Mammary epithelial cell (primary cell): ENCODE measurements at regions of chr18 and their contacts with region 1.

Region 1: DNA sequence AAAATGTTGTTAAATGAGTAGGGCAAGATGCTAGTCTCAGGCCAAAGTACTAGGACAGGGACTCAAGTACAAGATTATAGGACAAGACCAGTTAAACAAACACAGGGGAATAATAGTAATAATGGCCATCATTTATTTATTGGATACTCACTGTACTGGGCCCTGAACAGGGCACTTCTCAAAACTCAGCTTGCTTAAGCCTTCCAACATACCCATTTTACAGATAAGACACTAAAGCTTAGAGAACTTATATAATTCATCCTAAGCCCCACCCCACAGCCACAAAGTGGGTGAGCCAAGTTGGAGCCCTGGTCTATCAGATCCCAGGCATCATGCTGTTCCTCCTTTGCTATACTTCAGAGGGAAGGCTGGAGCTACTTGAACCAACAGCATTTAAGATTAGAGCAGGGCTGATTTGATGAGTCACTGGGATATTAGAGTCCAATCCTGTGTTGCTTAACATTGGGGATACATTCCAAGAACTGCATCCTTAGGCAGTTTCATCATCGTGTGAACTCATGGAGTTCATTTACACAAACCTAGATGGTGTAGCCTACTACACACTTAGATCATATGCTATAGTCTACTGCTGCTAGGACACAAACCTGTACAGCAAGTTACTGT is 153.6 kb downstream of the MTCL1 start:
- DNase-seq: peak; percentile 93
- H3K4me3 ChIP-seq: no peak overlapping the region
- H3K27ac ChIP-seq: no peak overlapping the region
- H3K4me1 ChIP-seq: peaks cover 17% of the 10 kb centered on the region
- H3K27me3 ChIP-seq: no peaks in the 10 kb centered on the region
- CTCF ChIP-seq: no peak

Region 2: DNA sequence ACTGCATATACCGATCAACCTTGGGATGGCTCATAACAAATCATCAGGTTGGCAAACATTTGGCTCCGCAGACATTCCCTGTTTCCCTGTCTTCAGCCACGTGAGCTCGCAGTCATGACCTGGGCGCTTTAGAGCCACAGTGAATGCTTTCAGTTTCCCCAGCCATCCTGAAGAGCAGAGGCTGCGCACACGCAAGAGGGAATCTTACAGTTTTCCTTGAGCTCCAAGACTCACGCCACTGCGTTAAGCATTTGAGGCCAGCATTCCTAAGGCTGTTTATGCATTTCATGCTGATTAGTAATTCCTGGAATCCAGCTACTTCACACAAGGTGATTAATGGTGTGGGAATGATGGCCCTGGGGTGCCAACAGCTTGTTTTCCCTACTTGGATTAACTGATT is 58.6 kb before region 1 on chr18:
- CTCF ChIA-PET with region 1: interaction called, 9 read pairs
- dilution Hi-C with region 1: loop called (anchors 10 kb)
- in situ Hi-C with region 1: no loop called
- intact Hi-C with region 1: no loop called
- DNase-seq: peak; percentile 78
- H3K4me3 ChIP-seq: no peak overlapping the region
- H3K27ac ChIP-seq: peak overlapping the region; percentile 51
- H3K4me1 ChIP-seq: peaks cover 39% of the 10 kb centered on the region
- H3K27me3 ChIP-seq: no peaks in the 10 kb centered on the region
- CTCF ChIP-seq: no peak

Region 3: GRCh38 chr18:8816816-8817215 is 42.2 kb before region 1 on chr18:
- CTCF ChIA-PET with region 1: no interaction called
- dilution Hi-C with region 1: no loop called
- in situ Hi-C with region 1: no loop called
- intact Hi-C with region 1: no loop called
- DNase-seq: no peak
- H3K4me3 ChIP-seq: no peak overlapping the region
- H3K27ac ChIP-seq: no peak overlapping the region
- H3K4me1 ChIP-seq: no peaks in the 10 kb centered on the region
- H3K27me3 ChIP-seq: no peaks in the 10 kb centered on the region
- CTCF ChIP-seq: no peak

Region 4: DNA sequence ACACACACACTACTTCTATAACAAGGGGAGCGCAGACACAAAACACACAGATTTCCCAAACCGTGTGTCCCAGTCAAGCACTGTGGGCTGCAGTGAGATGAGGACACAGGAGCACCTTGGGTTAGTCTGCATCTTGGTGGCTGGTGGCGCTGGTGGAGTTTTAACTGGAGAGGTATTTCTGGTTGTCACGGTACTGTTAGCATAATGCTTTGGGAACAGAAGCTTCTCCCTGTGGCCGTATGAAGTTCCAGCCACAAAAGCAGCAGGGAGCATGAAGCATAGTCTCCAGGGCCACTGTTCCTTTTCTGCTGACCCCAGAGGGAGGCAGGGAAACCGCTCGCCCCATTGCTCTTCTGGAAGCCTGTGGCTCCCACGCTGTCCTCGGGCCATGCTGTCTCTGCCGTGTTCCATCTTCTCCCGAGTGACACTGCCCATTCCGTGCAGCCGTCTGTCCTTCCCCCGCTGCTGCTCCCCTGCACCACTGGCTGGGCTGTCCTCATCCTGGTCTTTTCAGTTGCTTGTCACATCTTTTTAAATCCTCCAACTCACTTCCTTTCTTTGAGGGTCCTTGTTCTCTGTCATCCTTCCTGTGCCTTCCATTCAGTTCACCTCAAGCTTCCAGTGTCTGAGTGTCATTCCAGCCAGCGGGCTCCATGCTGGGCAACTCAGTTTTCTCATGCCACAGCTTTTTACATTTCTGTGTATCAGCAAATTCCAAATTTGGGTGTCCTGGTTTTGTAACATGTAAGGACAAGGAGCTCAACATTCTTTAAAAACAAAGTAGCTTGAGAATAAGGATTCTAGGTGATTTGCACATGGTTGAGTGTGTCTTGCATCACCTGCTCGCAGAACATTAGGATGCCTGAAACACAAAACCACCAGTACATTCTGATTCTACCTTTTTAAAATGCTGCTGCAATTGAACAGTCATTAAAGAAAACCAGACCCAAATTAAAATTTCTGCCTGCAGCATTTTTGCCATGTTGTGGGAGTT is 28.6 kb before region 1 on chr18:
- CTCF ChIA-PET with region 1: no interaction called
- dilution Hi-C with region 1: no loop called
- in situ Hi-C with region 1: no loop called
- intact Hi-C with region 1: loop called (anchors 1 kb)
- DNase-seq: no peak
- H3K4me3 ChIP-seq: no peak overlapping the region
- H3K27ac ChIP-seq: no peak overlapping the region
- H3K4me1 ChIP-seq: peaks cover 10% of the 10 kb centered on the region
- H3K27me3 ChIP-seq: no peaks in the 10 kb centered on the region
- CTCF ChIP-seq: no peak

Region 5: GRCh38 chr18:8930990-8931648 is 72.1 kb after region 1 on chr18:
- CTCF ChIA-PET with region 1: no interaction called
- dilution Hi-C with region 1: no loop called
- in situ Hi-C with region 1: no loop called
- intact Hi-C with region 1: no loop called
- DNase-seq: no peak
- H3K4me3 ChIP-seq: no peak overlapping the region
- H3K27ac ChIP-seq: no peak overlapping the region
- H3K4me1 ChIP-seq: no peaks in the 10 kb centered on the region
- H3K27me3 ChIP-seq: no peaks in the 10 kb centered on the region
- CTCF ChIP-seq: no peak

Region 6: DNA sequence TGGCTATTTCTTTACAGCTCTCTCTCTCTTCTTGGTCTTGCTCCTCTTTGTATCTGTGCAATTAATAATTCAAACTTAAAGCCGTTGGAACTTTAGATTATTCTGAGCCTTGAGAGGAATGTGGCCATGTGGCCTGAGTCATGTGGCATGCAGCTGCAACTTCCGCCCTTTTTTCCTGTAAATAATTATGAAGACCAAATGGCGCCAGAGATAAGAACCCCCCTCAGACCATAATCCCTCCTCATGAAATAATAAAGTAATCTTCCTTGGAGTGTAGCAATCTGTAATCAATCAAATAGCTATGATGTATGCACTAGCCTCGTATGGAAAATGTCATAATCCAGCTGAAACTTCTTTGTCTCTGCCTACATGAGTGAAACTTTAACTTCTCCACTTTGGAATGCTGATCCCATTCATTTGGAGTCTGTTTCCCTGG is 462.0 kb after region 1 on chr18:
- CTCF ChIA-PET with region 1: no interaction called
- dilution Hi-C with region 1: no loop called
- in situ Hi-C with region 1: no loop called
- intact Hi-C with region 1: no loop called
- DNase-seq: no peak
- H3K4me3 ChIP-seq: no peak overlapping the region
- H3K27ac ChIP-seq: no peak overlapping the region
- H3K4me1 ChIP-seq: peaks cover 8% of the 10 kb centered on the region
- H3K27me3 ChIP-seq: no peaks in the 10 kb centered on the region
- CTCF ChIP-seq: no peak